ENCODE measurements at regions of chr5 and their contacts with region 1.

Region 1: DNA sequence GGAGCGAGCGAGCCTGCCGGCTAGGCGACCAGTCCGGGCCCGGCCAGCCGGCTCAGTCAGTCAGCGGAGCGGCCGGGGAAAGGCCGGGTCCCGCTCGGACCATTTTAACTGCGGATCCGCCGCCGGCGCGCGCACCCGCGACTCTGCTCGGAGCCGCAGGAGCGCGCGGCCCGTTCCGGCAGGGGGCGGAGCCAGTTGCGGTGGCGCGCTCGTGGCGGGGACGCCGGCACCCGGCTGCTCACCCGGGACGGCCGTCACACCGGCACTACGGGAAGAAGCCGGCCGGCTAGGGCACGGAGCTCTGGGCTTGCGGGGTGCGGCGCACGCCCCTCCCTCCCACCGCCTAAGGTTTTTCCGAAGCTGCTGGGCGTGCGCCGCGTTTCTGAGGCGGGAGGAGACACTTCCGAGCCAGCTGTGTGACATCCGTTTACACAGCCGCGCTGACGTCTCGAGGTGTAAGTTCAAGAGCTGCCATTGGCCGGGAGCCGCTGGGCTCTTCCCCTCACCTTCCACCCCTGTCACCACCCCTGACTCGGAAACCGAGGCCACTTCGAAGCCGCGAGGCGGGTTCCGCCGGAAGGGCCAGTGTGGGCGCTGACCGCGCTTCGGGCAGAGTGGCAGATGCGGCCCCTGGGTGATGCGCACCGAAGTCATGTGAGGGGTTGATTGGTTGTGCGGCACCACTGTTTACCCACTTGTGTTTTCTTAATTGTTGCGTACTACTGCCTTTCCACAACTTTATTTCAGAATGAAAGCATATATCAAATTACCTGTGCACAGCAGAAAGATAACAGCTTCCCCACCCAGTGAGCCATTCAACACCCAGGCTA is at the start of gene FBXL17:
- DNase-seq: peak in 1 of 2 donors; percentile 96
- H3K4me3 ChIP-seq: peak within 1 kb of the TSS; percentile 78 to 90
- H3K27ac ChIP-seq: peak within 1 kb of the TSS; percentile 98
- H3K4me1 ChIP-seq: peaks cover 30% of the 10 kb centered on the region
- H3K27me3 ChIP-seq: no peaks in the 10 kb centered on the region
- CTCF ChIP-seq: no peak
- POLR2A ChIP-seq: peak in 1 of 2 donors; percentile 90
- total RNA-seq, gene FBXL17: 15.0 TPM

Region 2: GRCh38 chr5:108101130-108101529 is 281.0 kb before region 1 on chr5:
- intact Hi-C with region 1: no loop called
- DNase-seq: no peak
- H3K4me3 ChIP-seq: no peak overlapping the region
- H3K27ac ChIP-seq: no peak overlapping the region
- H3K4me1 ChIP-seq: no peaks in the 10 kb centered on the region
- H3K27me3 ChIP-seq: no peaks in the 10 kb centered on the region
- CTCF ChIP-seq: no peak
- POLR2A ChIP-seq: no peak

Region 3: DNA sequence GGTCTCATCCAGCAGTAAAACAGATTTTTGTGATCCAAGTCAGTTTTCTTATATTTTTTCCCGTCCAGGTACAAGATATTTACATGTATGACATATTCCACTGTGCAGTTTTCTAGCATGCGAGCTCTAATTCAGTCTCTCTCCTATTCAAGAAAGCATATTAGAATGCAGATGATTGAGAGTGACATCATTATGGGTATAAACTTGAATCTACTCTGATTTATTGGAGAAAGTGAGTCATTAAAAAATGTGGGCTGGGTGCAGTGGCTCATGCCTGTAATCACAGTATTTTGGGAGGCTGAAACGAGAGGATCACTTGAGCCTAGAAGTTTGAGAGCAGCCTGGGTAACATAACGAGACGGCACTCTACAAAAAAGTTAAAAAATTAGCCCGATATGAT is 371.7 kb after region 1 on chr5:
- intact Hi-C with region 1: loop called (anchors 10 kb)
- DNase-seq: no peak
- H3K4me3 ChIP-seq: no peak overlapping the region
- H3K27ac ChIP-seq: no peak overlapping the region
- H3K4me1 ChIP-seq: peaks cover 6% of the 10 kb centered on the region
- H3K27me3 ChIP-seq: no peaks in the 10 kb centered on the region
- CTCF ChIP-seq: no peak
- POLR2A ChIP-seq: no peak